ENCODE measurements at regions of chr4 and their contacts with region 1.

Region 1: DNA sequence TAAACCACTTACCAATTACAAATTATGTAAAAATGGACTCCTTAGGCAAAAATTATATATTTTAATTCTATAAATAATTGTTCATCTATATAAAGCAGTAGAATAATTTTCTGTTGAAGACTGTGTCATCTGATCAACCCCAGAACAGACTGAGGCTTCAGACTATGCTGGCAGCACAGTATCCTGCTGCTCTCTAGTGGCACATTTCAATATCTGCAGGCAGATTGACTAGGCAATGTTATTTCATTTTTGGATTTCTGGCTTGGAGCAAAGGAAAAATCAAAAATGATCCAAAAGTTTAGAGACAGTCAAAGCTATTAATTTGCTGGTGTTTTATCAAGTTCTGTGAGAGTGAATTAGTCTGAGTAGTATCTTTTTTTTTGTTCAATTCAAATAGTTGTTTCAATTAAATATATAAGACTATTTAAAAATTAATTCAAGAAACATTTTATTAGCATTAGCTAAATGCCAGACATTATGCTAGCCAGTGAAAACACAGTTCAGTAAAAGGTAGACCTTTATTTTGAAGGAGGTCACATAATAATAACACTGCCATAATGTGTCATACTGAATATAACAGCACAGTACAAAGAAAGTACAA is 21.3 kb upstream of the SULT1E1 start:
- DNase-seq: no peak
- H3K4me3 Mint-ChIP-seq: no peak overlapping the region
- H3K27ac Mint-ChIP-seq: no peak overlapping the region
- H3K4me1 Mint-ChIP-seq: no peaks in the 10 kb centered on the region
- H3K27me3 Mint-ChIP-seq: peaks cover 3% of the 10 kb centered on the region

Region 2: GRCh38 chr4:69823481-69824186 is 57.6 kb before region 1 on chr4:
- intact Hi-C with region 1: loop called (anchors 1 kb)
- DNase-seq: no peak
- H3K4me3 Mint-ChIP-seq: no peak overlapping the region
- H3K27ac Mint-ChIP-seq: no peak overlapping the region
- H3K4me1 Mint-ChIP-seq: peaks cover 5% of the 10 kb centered on the region
- H3K27me3 Mint-ChIP-seq: no peaks in the 10 kb centered on the region

Measured in activated T-helper 1 cell treated with anti-CD3 and anti-CD28 coated beads, Interleukin-12 subunit alpha, Interleukin-12 subunit beta, Interleukin-2, Interleukin-4 antibody, amounts not matched to agents 30 ng/mL and 10 ng/mL and 1 ng/mL, durations not matched to agents 14 hours and 24 hours and 36 hours (primary cell).